CD4-positive, alpha-beta memory T cell (primary cell): ENCODE measurements at regions of chr3 and their contacts with region 1.

Region 1: DNA sequence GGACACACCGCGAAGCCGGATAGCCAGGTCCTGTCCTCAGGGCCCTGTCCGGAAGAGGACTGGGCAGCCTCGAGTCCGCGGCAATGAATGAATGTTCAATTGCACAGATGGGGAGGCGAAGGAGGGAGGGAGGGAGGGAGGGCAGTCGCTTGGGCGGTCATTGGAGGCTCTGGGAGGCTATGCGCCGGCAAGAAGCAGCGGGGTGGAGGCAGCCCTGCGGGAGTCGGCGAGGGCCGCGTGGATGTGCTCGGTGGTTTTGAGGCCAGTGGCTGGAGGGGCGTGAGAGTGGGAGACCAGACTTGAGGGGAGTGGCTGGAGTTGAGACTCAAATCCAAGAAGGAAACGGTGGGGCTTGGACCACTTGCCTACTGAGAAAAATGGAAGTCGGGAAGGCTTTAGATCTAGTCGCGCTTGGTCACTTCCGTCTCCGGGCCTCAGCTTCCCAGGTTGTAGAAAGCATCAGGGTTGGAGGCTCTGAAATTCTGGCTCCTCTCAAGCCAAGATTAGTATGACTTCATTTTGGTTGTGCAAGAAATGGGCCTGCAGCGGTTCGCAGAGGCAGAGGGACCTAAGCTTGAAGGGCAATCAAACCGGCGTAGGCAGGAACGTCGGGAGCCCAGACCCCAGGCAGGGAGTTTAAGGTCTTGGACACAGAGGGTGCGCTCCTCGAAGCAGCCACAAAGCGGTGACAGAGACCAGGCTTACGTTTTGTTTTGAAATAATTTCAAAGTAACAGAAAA is 21.1 kb upstream of the PLXND1 start:
- DNase-seq: peak; percentile 68 to 73 (median 69)
- H3K4me3 ChIP-seq: peak overlapping the region; percentile 64 to 70
- H3K4me3 Mint-ChIP-seq: peak overlapping the region; percentile 87 to 93 (median 90)
- H3K27ac ChIP-seq: peak overlapping the region; percentile 18
- H3K27ac Mint-ChIP-seq: peak overlapping the region; percentile 64 to 92 (median 88)
- H3K4me1 ChIP-seq: peaks cover 10% of the 10 kb centered on the region
- H3K4me1 Mint-ChIP-seq: peaks cover 7 to 22% (median 17%) of the 10 kb centered on the region in 4 donors
- H3K27me3 ChIP-seq: no peaks in the 10 kb centered on the region
- H3K27me3 Mint-ChIP-seq: no peaks in the 10 kb centered on the region

Region 2: GRCh38 chr3:129490242-129491045 is 137.2 kb before region 1 on chr3:
- CTCF ChIA-PET with region 1: interaction called, 35 read pairs
- POLR2A ChIA-PET with region 1: interaction called, 7 read pairs
- intact Hi-C with region 1: loop called (anchors 1 kb)
- DNase-seq: peak in 4 of 5 donors; percentile 48 to 61 (median 56)
- H3K4me3 ChIP-seq: no peak overlapping the region
- H3K4me3 Mint-ChIP-seq: no peak overlapping the region
- H3K27ac ChIP-seq: no peak overlapping the region
- H3K27ac Mint-ChIP-seq: peak overlapping the region in 4 of 7 donors; percentile 30 to 55 (median 46)
- H3K4me1 ChIP-seq: no peaks in the 10 kb centered on the region
- H3K4me1 Mint-ChIP-seq: peaks cover 0 to 4% (median 0%) of the 10 kb centered on the region in 4 donors
- H3K27me3 ChIP-seq: no peaks in the 10 kb centered on the region
- H3K27me3 Mint-ChIP-seq: no peaks in the 10 kb centered on the region

Region 3: GRCh38 chr3:129606636-129607390 is 20.8 kb before region 1 on chr3 and contains the start of gene PLXND1:
- CTCF ChIA-PET with region 1: no interaction called
- POLR2A ChIA-PET with region 1: interaction called, 17 read pairs
- intact Hi-C with region 1: loop called (anchors 2 kb)
- DNase-seq: peak in 4 of 5 donors; percentile 36 to 55 (median 46)
- H3K4me3 ChIP-seq: peak within 1 kb of the TSS in 1 of 2 donors; percentile 62
- H3K4me3 Mint-ChIP-seq: peak within 1 kb of the TSS; percentile 91 to 99 (median 95)
- H3K27ac ChIP-seq: no peak within 1 kb of the TSS
- H3K27ac Mint-ChIP-seq: peak within 1 kb of the TSS; percentile 81 to 99 (median 93)
- H3K4me1 ChIP-seq: peaks cover 28% of the 10 kb centered on the region
- H3K4me1 Mint-ChIP-seq: peaks cover 21 to 50% (median 32%) of the 10 kb centered on the region in 4 donors
- H3K27me3 ChIP-seq: no peaks in the 10 kb centered on the region
- H3K27me3 Mint-ChIP-seq: peaks cover 2 to 4% of the 10 kb centered on the region in 2 donors
- total RNA-seq, gene PLXND1: 71.4 to 72.5 TPM

Region 4: GRCh38 chr3:129745253-129745652 is 117.7 kb after region 1 on chr3:
- CTCF ChIA-PET with region 1: no interaction called
- POLR2A ChIA-PET with region 1: no interaction called
- intact Hi-C with region 1: no loop called
- DNase-seq: no peak
- H3K4me3 ChIP-seq: no peak overlapping the region
- H3K4me3 Mint-ChIP-seq: no peak overlapping the region
- H3K27ac ChIP-seq: no peak overlapping the region
- H3K27ac Mint-ChIP-seq: peak overlapping the region in 1 of 7 donors; percentile 53
- H3K4me1 ChIP-seq: peaks cover 14% of the 10 kb centered on the region
- H3K4me1 Mint-ChIP-seq: peaks cover 19 to 22% (median 21%) of the 10 kb centered on the region in 4 donors
- H3K27me3 ChIP-seq: no peaks in the 10 kb centered on the region
- H3K27me3 Mint-ChIP-seq: no peaks in the 10 kb centered on the region

Region 5: DNA sequence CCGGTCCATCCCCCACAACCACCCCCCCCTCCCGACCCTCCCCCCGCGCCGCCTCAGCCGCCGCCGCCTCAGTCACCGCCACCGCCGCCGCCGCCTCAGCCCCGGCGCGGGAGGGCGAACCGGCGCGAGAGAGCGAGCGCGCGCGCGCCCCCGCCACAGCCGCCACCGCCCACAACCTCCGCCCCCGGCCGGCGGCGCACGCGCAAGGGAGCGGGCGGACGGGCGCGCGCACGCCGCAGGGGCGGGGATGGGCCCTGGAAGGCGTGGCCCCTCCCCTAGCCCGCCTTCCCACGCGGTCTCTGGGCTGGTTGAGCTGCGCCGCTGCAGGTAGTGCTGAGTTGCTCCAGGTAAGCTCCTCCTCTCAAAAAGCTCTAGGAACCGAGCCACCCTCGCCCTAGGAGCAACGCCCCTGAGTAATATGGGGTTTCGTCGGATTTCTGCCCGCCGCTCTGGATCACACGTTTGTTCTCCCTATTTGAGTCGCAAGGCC is 266.0 kb after region 1 on chr3 and contains the start of gene TMCC1:
- CTCF ChIA-PET with region 1: interaction called, 3 read pairs
- POLR2A ChIA-PET with region 1: interaction called, 11 read pairs
- intact Hi-C with region 1: no loop called
- DNase-seq: peak; percentile 90 to 94 (median 92)
- H3K4me3 ChIP-seq: peak within 1 kb of the TSS; percentile 87 to 96
- H3K4me3 Mint-ChIP-seq: peak within 1 kb of the TSS; percentile 88 to 96 (median 92)
- H3K27ac ChIP-seq: peak within 1 kb of the TSS; percentile 82
- H3K27ac Mint-ChIP-seq: peak within 1 kb of the TSS; percentile 92 to 97 (median 93)
- H3K4me1 ChIP-seq: peaks cover 46% of the 10 kb centered on the region
- H3K4me1 Mint-ChIP-seq: peaks cover 23 to 47% (median 37%) of the 10 kb centered on the region in 4 donors
- H3K27me3 ChIP-seq: no peaks in the 10 kb centered on the region
- H3K27me3 Mint-ChIP-seq: peaks cover 0 to 1% of the 10 kb centered on the region in 2 donors
- total RNA-seq, gene TMCC1: 36.4 to 39.3 TPM

Region 6: DNA sequence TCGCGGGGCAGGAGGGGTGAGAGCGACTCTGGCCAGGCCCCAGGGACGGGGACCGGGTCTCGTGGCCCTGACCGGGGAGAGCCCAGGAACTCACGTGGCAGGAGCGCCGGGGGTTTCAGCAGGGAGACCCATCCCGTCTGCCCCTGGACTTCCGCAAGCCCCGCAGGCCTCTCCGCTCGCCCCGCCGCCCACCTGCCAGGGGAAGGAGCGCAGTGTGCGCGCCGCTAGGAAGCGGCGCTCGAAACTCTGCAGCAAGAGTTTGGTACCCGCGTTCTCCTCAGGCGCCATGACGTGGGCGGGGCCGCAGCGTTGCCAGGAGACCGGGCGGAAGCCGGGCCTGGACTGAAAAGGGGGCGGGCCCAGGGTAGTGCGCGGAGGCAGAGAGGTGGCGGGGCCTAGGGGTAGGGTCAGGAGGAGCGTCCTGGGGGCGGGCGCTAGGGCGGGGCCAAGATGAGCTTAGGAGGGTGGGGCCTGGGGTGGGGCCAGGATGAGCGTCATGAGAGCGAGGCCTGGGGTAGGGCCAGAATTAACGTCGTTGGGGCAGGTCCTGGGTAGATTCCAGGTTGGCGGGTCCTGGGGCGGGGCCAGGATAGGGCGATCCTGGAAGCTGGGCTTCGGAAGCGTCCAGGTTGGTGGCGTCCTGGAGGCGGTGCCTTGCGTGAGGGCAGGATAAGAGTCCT is 483.7 kb after region 1 on chr3:
- CTCF ChIA-PET with region 1: no interaction called
- POLR2A ChIA-PET with region 1: no interaction called
- intact Hi-C with region 1: loop called (anchors 5 kb)
- DNase-seq: peak; percentile 97 to 99 (median 99)
- H3K4me3 ChIP-seq: peak overlapping the region in 1 of 2 donors; percentile 73
- H3K4me3 Mint-ChIP-seq: peak overlapping the region; percentile 96 to 100 (median 98)
- H3K27ac ChIP-seq: peak overlapping the region; percentile 82
- H3K27ac Mint-ChIP-seq: peak overlapping the region; percentile 94 to 100 (median 100)
- H3K4me1 ChIP-seq: peaks cover 8% of the 10 kb centered on the region
- H3K4me1 Mint-ChIP-seq: peaks cover 10 to 27% (median 12%) of the 10 kb centered on the region in 4 donors
- H3K27me3 ChIP-seq: no peaks in the 10 kb centered on the region
- H3K27me3 Mint-ChIP-seq: no peaks in the 10 kb centered on the region